Vagina (tissue), 2 donors: ENCODE measurements at regions of chr9 and their contacts with region 1.

Region 1: DNA sequence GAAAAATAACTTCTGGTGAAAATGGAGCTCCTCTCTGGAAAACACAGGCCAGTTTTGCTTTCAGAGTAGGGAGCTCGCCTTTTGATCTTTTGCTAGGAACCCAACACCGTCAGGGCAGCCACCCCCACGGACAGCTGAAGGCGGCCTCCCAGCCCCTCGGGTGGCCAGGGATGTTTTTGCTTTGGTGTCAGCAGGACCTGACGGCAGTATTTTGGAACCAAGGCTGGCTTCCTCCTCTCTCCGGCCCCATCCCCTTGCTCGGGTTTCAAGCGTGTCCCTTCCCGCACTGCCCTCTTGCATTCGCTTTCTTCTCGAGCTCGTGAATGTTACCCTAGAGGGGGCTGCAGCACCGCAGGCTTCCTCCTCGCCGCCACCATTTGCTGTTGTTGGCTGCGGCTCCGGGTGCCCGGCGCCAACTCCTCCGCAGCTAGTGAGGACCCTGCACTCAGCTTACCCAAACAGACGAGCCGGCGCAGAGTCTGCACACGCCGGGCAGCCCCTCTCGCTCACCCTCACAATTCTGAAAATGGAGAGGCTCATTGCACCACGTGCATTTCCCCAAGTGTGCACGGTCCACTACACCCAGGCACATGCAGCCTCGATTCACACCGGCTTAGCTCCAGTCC is 35.5 kb upstream of the ADAMTSL1 start:
- DNase-seq: no peak
- H3K4me3 ChIP-seq: peak overlapping the region; percentile 45 to 50
- H3K27ac ChIP-seq: peak overlapping the region; percentile 71
- H3K4me1 ChIP-seq: peaks cover 24% of the 10 kb centered on the region
- H3K27me3 ChIP-seq: no peaks in the 10 kb centered on the region
- CTCF ChIP-seq: peak in 1 of 3 experiments; percentile 30
- POLR2A ChIP-seq: no peak

Region 2: GRCh38 chr9:16626577-16627131 is 1811.8 kb before region 1 on chr9:
- intact Hi-C with region 1: loop called (anchors 5 kb)
- DNase-seq: no peak
- H3K4me3 ChIP-seq: peak overlapping the region in 1 of 2 donors; percentile 12
- H3K27ac ChIP-seq: peak overlapping the region; percentile 6
- H3K4me1 ChIP-seq: peaks cover 41% of the 10 kb centered on the region
- H3K27me3 ChIP-seq: no peaks in the 10 kb centered on the region
- CTCF ChIP-seq: no peak
- POLR2A ChIP-seq: no peak

Region 3: DNA sequence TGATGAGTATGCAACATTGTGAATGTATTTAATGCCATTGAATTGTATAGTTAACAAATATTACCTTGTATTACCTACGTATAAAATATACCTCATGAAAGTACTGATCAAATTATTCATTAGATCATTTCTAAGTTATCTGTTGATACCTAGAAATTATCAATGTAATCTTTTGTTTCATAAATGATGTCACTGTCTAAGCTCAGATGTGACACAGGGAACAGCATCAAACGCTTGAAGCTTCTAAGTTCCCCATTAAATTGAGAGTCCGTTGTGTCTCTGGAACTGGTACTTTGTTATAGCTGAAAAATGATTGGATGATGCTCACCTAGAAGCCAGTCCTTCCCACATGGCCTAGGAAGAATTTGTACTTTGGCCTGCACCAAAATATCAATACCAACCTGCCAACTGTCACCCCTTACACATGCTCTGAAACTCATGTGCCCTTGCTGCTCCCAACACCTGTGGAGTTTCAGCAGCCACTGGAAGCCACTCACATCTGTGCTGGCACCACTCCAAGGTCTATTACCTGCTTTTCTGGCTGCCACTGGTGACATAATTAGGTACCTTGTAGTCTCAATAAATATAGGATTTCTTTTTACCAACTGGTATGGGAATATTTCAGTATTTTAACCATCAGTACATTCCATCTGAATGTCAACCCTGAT is 496.0 kb before region 1 on chr9:
- intact Hi-C with region 1: no loop called
- DNase-seq: no peak
- H3K4me3 ChIP-seq: no peak overlapping the region
- H3K27ac ChIP-seq: no peak overlapping the region
- H3K4me1 ChIP-seq: no peaks in the 10 kb centered on the region
- H3K27me3 ChIP-seq: no peaks in the 10 kb centered on the region
- CTCF ChIP-seq: no peak
- POLR2A ChIP-seq: no peak

Region 4: DNA sequence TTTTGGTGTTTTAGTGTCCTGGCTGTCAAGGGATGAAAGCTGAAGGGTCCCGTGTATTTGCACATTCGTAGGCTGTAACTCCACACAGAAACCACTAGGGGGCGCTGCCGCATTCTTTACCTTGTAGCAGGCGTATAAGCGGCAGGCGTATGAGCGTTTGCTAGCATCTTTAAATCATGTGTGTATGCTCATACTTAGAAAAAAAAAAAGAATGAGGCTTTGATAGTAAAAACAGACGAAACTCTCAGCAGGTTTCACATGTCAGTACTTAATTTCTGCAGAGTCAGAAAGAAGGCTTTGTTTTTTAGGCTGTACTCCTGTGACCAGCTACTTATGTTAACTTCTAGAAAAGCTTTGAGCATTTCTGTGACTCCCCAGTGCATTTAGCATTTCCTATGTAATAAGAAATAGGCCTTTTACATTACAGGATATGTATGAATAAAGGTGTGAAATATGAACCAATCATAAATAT is 183.2 kb before region 1 on chr9:
- intact Hi-C with region 1: loop called (anchors 10 kb)
- DNase-seq: no peak
- H3K4me3 ChIP-seq: no peak overlapping the region
- H3K27ac ChIP-seq: no peak overlapping the region
- H3K4me1 ChIP-seq: no peaks in the 10 kb centered on the region
- H3K27me3 ChIP-seq: no peaks in the 10 kb centered on the region
- CTCF ChIP-seq: peak; percentile 88 to 95 (median 91)
- POLR2A ChIP-seq: no peak

Region 5: GRCh38 chr9:18566121-18566520 is 127.7 kb after region 1 on chr9:
- intact Hi-C with region 1: no loop called
- DNase-seq: no peak
- H3K4me3 ChIP-seq: no peak overlapping the region
- H3K27ac ChIP-seq: no peak overlapping the region
- H3K4me1 ChIP-seq: peaks cover 23% of the 10 kb centered on the region
- H3K27me3 ChIP-seq: no peaks in the 10 kb centered on the region
- CTCF ChIP-seq: no peak
- POLR2A ChIP-seq: no peak

Region 6: DNA sequence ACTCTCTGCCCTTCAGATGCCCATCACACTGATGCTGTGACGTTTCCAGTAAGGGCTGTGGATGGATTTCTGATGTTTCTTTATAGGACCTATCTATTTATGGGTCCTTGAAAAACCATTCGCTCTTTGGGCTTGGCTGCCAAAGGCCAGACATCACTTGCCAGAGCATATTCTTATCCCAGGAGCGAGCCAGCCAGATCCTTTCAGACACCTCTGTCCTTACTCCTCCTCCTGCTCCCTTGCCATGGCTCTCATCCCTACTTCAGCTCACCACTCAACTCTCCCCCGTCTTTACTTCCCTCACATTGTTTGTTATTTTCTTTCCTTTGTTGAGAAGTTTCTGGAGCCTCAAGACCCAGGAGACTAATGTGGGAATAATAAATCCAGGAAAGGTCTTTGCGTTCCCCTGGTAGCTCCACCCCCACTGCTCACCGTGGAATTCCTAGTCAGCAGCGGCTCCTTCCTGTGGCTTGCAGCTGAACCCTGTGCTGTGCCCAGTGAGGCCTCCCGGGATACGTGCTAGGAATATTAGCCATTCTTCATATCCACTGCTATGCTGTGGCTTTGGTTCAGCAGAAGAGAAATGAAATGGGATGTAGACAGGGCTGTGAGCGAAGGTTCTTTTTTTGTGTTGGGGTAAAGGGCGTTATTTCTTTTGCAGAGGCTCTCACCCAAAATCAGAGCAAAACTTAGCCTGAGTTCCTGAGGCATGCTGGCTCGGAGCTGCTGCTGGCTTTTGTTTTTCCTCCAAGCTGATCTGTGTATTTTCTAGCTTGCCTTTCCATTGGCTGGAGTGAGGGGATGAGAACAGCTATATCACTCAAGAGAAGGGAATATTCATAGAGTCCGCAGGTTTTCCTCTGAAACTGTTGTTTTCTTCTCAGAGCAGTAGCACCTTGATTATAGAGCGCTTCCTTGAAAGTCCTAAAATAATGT is 423.5 kb after region 1 on chr9:
- intact Hi-C with region 1: loop called (anchors 10 kb)
- DNase-seq: no peak
- H3K4me3 ChIP-seq: no peak overlapping the region
- H3K27ac ChIP-seq: peak overlapping the region; percentile 41
- H3K4me1 ChIP-seq: peaks cover 25% of the 10 kb centered on the region
- H3K27me3 ChIP-seq: no peaks in the 10 kb centered on the region
- CTCF ChIP-seq: no peak
- POLR2A ChIP-seq: no peak